Gastrocnemius medialis (tissue), 4 donors: ENCODE measurements at regions of chr11 and their contacts with region 1.

Region 1: GRCh38 chr11:65615229-65615941 is at the start of gene PCNX3:
- DNase-seq: peak; percentile 100
- ATAC-seq: peak; percentile 86 to 92
- H3K4me3 ChIP-seq: peak within 1 kb of the TSS; percentile 79 to 85 (median 80)
- H3K27ac ChIP-seq: peak within 1 kb of the TSS; percentile 82 to 93 (median 91)
- H3K4me1 ChIP-seq: peaks cover 30 to 44% of the 10 kb centered on the region in 2 donors
- H3K27me3 ChIP-seq: no peaks in the 10 kb centered on the region
- CTCF ChIP-seq: no peak
- POLR2A ChIP-seq: peak; percentile 27 to 75
- total RNA-seq, gene PCNX3: 7.6 to 15.6 (median 13.1) TPM

Region 2: GRCh38 chr11:65095974-65096806 is 519.2 kb before region 1 on chr11 and contains the start of gene VPS51:
- in situ Hi-C with region 1: no loop called
- intact Hi-C with region 1: no loop called
- DNase-seq: peak; percentile 81 to 88
- ATAC-seq: peak; percentile 93 to 96
- H3K4me3 ChIP-seq: peak within 1 kb of the TSS; percentile 88 to 96 (median 89)
- H3K27ac ChIP-seq: peak within 1 kb of the TSS; percentile 91 to 97 (median 93)
- H3K4me1 ChIP-seq: peaks cover 34 to 36% of the 10 kb centered on the region in 2 donors
- H3K27me3 ChIP-seq: no peaks in the 10 kb centered on the region
- CTCF ChIP-seq: peak in 3 of 5 experiments; percentile 12 to 48 (median 32)
- POLR2A ChIP-seq: peak; percentile 47 to 72
- total RNA-seq, gene VPS51: 206 to 515 (median 266) TPM

Region 3: GRCh38 chr11:65540297-65541092 is 74.9 kb before region 1 on chr11:
- in situ Hi-C with region 1: no loop called
- intact Hi-C with region 1: loop called (anchors 1 kb)
- DNase-seq: peak; percentile 75 to 90
- ATAC-seq: peak; percentile 88
- H3K4me3 ChIP-seq: peak overlapping the region; percentile 60 to 76 (median 64)
- H3K27ac ChIP-seq: peak overlapping the region; percentile 86 to 92 (median 90)
- H3K4me1 ChIP-seq: peaks cover 7 to 16% of the 10 kb centered on the region in 2 donors
- H3K27me3 ChIP-seq: no peaks in the 10 kb centered on the region
- CTCF ChIP-seq: peak; percentile 82 to 96 (median 92)
- POLR2A ChIP-seq: peak; percentile 52 to 67

Region 4: DNA sequence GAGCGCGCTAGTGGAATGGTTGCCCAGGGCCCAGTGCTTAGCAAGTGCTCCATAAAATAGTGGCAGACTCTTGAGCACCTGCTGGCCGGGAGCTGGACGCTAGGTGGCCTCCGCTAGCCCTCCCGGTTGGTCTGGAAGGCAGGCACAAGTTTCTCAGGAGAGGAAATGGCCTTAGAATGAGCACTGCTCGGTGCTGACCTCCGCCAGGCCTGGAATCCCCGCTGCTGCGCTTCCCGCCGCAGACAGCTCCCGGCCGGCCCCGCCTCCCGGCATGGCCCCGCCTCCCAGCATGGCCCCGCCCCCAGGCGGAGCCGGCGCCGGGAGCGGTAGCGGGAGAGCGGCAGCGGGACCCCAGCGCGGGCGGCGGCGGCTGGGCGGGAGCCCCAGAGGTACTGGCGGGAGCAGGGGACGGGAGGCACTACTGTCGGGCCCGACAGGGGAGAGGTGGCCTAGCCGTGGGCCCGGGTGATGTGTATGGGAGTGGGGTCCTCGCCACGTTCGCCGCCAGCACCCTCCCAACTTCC is 22.5 kb after region 1 on chr11 and contains the start of gene SIPA1:
- in situ Hi-C with region 1: no loop called
- intact Hi-C with region 1: loop called (anchors 2 kb)
- DNase-seq: peak; percentile 28 to 55
- ATAC-seq: peak; percentile 74 to 83
- H3K4me3 ChIP-seq: peak within 1 kb of the TSS; percentile 64 to 71 (median 68)
- H3K27ac ChIP-seq: peak within 1 kb of the TSS; percentile 75 to 84 (median 82)
- H3K4me1 ChIP-seq: peaks cover 17 to 20% of the 10 kb centered on the region in 2 donors
- H3K27me3 ChIP-seq: no peaks in the 10 kb centered on the region
- CTCF ChIP-seq: peak in 4 of 5 experiments; percentile 31 to 42 (median 38)
- POLR2A ChIP-seq: peak; percentile 63 to 76
- total RNA-seq, gene SIPA1: 6.7 to 10.9 (median 10.0) TPM

Region 5: GRCh38 chr11:65662799-65663638 is 47.6 kb after region 1 on chr11 and contains the start of gene RELA:
- in situ Hi-C with region 1: no loop called
- intact Hi-C with region 1: loop called (anchors 1 kb)
- DNase-seq: peak; percentile 78 to 89
- ATAC-seq: peak; percentile 90
- H3K4me3 ChIP-seq: peak within 1 kb of the TSS; percentile 65 to 91 (median 78)
- H3K27ac ChIP-seq: peak within 1 kb of the TSS; percentile 91 to 99 (median 96)
- H3K4me1 ChIP-seq: peaks cover 22 to 26% of the 10 kb centered on the region in 2 donors
- H3K27me3 ChIP-seq: no peaks in the 10 kb centered on the region
- CTCF ChIP-seq: peak in 3 of 5 experiments; percentile 11 to 43 (median 29)
- POLR2A ChIP-seq: peak; percentile 82 to 88
- total RNA-seq, gene RELA: 39.7 to 68.3 (median 56.3) TPM

Region 6: DNA sequence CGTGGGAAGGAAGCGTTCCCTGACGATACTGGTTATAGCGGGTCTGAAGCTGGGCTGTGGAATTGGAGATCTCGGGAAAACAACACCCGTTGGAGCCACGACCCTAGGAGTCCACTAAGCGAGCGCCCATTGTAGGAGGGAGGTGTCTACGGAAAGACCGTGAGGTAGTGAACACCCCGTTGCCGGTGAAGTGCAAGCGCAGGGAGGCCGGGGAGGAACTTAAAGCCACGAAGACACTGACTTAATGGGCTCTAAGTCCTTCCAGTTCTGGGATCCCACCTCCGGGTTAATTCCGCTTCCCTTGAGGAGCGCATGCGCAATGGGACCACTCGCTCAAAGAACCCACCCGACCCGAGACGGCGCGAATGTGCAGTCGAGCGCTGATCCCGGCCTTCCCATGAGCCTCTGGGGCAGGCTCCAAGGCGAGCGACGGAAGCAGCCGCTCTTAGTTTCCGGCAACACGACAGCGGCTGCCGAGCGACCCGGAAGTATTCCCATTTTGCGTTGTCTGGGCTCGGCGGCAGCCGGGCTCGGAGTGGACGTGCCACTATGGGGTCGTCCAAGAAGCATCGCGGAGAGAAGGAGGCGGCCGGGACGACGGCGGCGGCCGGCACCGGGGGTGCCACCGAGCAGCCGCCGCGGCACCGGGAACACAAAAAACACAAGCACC is 346.0 kb after region 1 on chr11 and contains the start of gene SART1:
- in situ Hi-C with region 1: no loop called
- intact Hi-C with region 1: loop called (anchors 5 kb)
- DNase-seq: peak; percentile 97 to 98
- ATAC-seq: peak; percentile 97 to 98
- H3K4me3 ChIP-seq: peak within 1 kb of the TSS; percentile 69 to 100 (median 88)
- H3K27ac ChIP-seq: peak within 1 kb of the TSS; percentile 81 to 96 (median 90)
- H3K4me1 ChIP-seq: peaks cover 16 to 24% of the 10 kb centered on the region in 2 donors
- H3K27me3 ChIP-seq: no peaks in the 10 kb centered on the region
- CTCF ChIP-seq: peak in 1 of 5 experiments; percentile 14
- POLR2A ChIP-seq: peak; percentile 61 to 81
- total RNA-seq, gene SART1: 12.0 to 55.2 (median 33.3) TPM